ENCODE measurements at regions of chr17 and their contacts with region 1.

Region 1: GRCh38 chr17:68205251-68205807 is 42.5 kb upstream of the AMZ2 start:
- DNase-seq: peak; percentile 96
- ATAC-seq: peak; percentile 87
- H3K4me3 Mint-ChIP-seq: peak overlapping the region; percentile 93
- H3K27ac Mint-ChIP-seq: peak overlapping the region; percentile 78
- H3K4me1 Mint-ChIP-seq: peaks cover 27% of the 10 kb centered on the region
- H3K27me3 Mint-ChIP-seq: peaks cover 7% of the 10 kb centered on the region

Region 2: DNA sequence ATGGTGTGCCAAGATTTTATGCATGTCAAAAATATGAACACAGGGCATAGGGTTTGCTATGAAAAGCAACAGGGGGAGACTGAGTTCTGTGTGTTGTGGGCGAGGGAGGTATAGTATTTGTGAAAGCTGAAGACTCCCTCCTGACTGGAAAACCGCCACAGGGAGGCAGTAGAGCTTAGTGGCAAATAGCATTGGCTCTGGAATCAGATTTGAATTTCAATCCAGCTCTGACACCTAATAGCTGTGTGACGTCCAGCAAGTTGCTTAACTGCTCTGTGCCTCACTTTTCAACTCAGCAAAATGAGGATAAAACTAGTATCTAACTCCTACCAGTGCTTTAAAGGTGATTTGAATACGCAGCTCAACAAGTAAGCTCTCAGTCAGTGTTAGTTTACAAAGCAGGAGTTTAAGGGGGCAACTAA is 147.8 kb before region 1 on chr17:
- CTCF ChIA-PET with region 1: no interaction called
- POLR2A ChIA-PET with region 1: no interaction called
- intact Hi-C with region 1: loop called in 1 of 2 experiments (anchors 1 kb)
- DNase-seq: peak; percentile 62
- ATAC-seq: peak; percentile 88
- H3K4me3 Mint-ChIP-seq: no peak overlapping the region
- H3K27ac Mint-ChIP-seq: no peak overlapping the region
- H3K4me1 Mint-ChIP-seq: no peaks in the 10 kb centered on the region
- H3K27me3 Mint-ChIP-seq: no peaks in the 10 kb centered on the region

Region 3: GRCh38 chr17:68172461-68172954 is 32.8 kb before region 1 on chr17:
- CTCF ChIA-PET with region 1: interaction called, 22 read pairs
- POLR2A ChIA-PET with region 1: interaction called, 3 read pairs
- intact Hi-C with region 1: loop called (anchors 1 kb)
- DNase-seq: peak; percentile 84
- ATAC-seq: peak; percentile 69
- H3K4me3 Mint-ChIP-seq: no peak overlapping the region
- H3K27ac Mint-ChIP-seq: no peak overlapping the region
- H3K4me1 Mint-ChIP-seq: peaks cover 17% of the 10 kb centered on the region
- H3K27me3 Mint-ChIP-seq: no peaks in the 10 kb centered on the region

Region 4: DNA sequence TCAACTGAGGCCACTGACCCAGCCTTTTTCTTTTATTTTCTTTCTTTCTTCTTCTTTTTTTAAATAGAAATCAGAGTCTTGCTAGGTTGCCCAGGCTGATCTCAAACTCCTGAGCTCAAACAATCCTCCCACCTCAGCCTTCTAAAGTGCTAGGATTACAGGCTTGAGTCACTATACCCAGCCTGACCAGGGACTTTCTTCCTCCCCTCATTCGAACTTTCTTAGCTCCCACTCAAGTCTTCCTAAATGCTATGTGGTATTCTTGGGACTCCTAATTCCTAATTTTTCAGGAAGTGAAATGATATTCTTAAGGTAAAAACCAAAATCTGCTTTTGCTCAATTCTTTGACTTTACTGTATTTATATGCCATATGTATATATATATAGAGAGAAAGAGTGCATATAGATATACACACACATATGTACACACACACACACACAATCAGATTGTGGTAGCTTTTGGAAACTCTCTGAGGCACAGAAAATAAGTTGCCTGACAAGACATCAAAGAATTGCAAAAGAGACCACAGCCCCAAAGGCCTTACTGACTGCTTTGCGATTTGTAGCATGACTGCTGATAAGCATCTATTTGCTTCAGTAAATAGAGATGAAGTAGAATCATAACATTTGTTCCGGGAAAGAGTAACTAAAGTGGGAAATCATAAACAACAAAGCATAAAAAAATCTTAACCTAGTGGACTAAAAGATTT is 33.0 kb after region 1 on chr17:
- CTCF ChIA-PET with region 1: interaction called, 4 read pairs
- POLR2A ChIA-PET with region 1: interaction called, 5 read pairs
- intact Hi-C with region 1: loop called (anchors 1 to 2 kb)
- DNase-seq: no peak
- ATAC-seq: peak; percentile 18
- H3K4me3 Mint-ChIP-seq: peak overlapping the region; percentile 78
- H3K27ac Mint-ChIP-seq: peak overlapping the region; percentile 98
- H3K4me1 Mint-ChIP-seq: peaks cover 57% of the 10 kb centered on the region
- H3K27me3 Mint-ChIP-seq: no peaks in the 10 kb centered on the region

Region 5: DNA sequence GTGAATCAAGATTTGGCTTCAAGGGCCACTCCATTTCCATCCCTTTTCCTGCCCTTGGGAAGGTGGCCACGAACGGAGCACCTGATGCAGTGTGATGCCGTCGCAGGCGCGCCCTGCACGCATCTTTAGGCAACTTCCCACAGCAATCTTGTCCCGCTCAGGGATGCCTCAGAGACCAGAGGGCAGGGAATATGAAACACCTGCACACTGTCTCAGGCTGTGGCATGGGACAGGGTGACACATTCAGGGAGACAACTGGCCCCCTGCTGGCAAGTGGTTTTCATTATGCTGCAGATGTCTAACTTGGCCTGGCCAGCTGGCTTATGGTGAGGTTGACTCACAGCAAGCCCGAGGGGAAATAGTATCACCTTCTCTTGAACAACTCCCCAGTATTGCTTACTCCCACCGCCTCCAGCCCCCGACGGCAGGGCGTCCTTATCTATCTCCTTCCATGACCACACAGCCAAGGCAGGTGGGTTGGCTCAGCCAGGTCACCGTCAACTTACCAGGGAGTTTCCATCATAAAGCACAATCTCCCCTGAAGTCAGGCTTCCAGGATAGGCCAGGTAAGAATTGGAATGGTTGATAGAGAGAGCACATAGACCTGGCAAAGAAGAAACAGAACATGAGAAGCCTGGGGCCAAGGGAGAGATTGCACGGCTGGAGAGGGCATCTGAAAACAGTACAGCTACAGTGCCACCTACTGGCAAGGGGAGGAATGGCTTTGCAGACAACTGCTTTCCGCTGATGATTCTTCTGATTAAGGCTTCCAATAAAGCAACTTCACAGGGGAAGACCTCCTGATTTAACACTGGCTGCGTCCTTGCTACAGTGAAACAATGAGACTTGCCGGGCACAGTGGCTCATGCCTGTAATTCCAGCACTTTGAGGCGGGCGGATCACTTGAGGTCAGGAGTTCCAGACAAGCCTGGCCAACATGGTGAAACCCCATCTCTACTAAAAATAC is 230.8 kb after region 1 on chr17:
- CTCF ChIA-PET with region 1: interaction called, 11 read pairs
- POLR2A ChIA-PET with region 1: no interaction called
- intact Hi-C with region 1: loop called in 1 of 2 experiments (anchors 2 kb)
- DNase-seq: peak; percentile 91
- ATAC-seq: peak; percentile 80
- H3K4me3 Mint-ChIP-seq: no peak overlapping the region
- H3K27ac Mint-ChIP-seq: peak overlapping the region; percentile 79
- H3K4me1 Mint-ChIP-seq: peaks cover 44% of the 10 kb centered on the region
- H3K27me3 Mint-ChIP-seq: no peaks in the 10 kb centered on the region

Measured in activated CD4-positive, alpha-beta T cell treated with anti-CD3 and anti-CD28 coated beads for 36 hours (primary cell).